OCI-LY7 (cell line): ENCODE measurements at regions of chr11 and their contacts with region 1.

Region 1: DNA sequence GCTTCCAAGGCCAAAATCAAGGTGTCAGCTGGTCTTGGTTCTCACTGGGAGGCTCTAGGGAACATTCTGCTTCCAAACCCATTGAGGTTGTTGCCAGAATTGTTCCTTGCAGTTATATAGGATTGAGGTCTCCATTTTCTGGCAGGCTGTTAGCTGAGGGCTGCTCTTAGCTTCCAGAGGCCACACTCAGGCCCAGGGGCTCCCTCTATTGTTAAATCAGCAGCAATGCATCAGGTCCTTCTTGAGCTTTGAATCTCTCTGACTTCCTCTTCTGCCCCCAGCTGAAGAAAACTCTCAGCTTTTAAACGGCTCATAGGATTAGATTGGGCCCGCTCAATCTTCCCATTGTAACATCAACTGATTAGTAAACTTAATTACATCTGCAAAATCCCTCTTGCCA is 39.3 kb upstream of the BSX start:
- DNase-seq: peak; percentile 62
- H3K4me3 ChIP-seq: no peak overlapping the region
- H3K27ac ChIP-seq: no peak overlapping the region
- H3K4me1 ChIP-seq: no peaks in the 10 kb centered on the region
- CTCF ChIP-seq: peak; percentile 79

Region 2: DNA sequence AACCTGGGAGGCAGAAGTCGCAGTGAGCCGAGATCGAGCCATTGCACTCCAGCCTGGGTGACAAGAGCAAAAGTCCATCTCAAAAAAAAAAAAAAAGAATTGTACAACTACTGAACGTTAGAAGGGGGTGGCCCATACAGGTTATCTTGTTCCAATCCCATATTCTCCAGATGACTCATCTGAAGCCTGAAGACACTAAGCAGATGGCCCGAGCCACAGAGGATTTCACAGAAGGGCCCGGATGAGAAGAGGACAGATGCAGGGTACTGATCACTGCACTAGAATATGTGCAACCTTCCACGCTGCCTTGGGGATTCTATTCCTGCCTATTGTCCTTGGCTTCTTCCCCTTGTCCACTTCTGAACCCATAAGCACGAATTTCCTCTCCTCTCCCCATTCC is 436.3 kb before region 1 on chr11:
- CTCF ChIA-PET with region 1: no interaction called
- POLR2A ChIA-PET with region 1: no interaction called
- intact Hi-C with region 1: loop called (anchors 10 kb)
- DNase-seq: no peak
- H3K4me3 ChIP-seq: no peak overlapping the region
- H3K27ac ChIP-seq: no peak overlapping the region
- H3K4me1 ChIP-seq: peaks cover 3% of the 10 kb centered on the region
- CTCF ChIP-seq: no peak

Region 3: GRCh38 chr11:122628810-122629555 is 392.0 kb before region 1 on chr11:
- CTCF ChIA-PET with region 1: no interaction called
- POLR2A ChIA-PET with region 1: no interaction called
- intact Hi-C with region 1: loop called (anchors 5 kb)
- DNase-seq: peak; percentile 85
- H3K4me3 ChIP-seq: no peak overlapping the region
- H3K27ac ChIP-seq: no peak overlapping the region
- H3K4me1 ChIP-seq: peaks cover 10% of the 10 kb centered on the region
- CTCF ChIP-seq: peak; percentile 94

Region 4: GRCh38 chr11:122863704-122864326 is 157.2 kb before region 1 on chr11:
- CTCF ChIA-PET with region 1: interaction called, 3 read pairs
- POLR2A ChIA-PET with region 1: no interaction called
- intact Hi-C with region 1: loop called (anchors 2 kb)
- DNase-seq: peak; percentile 51
- H3K4me3 ChIP-seq: no peak overlapping the region
- H3K27ac ChIP-seq: no peak overlapping the region
- H3K4me1 ChIP-seq: no peaks in the 10 kb centered on the region
- CTCF ChIP-seq: peak; percentile 99

Region 5: DNA sequence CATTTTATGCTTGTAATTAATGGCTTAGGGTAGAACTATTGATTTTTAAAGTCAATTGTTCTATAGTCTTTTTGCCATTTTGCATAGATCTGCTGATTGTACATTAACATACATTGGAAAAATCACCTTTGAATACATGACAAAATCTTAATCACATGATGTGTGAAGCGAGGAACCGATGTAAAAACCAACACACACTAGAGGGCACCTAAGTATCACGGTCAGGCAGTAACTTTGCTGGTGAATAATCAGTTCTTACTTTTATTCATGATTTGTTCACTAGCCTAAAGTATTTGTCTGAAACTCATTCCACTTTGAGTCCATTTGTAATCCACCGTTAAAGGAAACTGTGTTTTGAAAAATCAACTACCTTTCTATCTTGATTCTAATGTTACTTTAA is 110.2 kb before region 1 on chr11:
- CTCF ChIA-PET with region 1: no interaction called
- POLR2A ChIA-PET with region 1: no interaction called
- intact Hi-C with region 1: loop called (anchors 5 kb)
- DNase-seq: no peak
- H3K4me3 ChIP-seq: no peak overlapping the region
- H3K27ac ChIP-seq: no peak overlapping the region
- H3K4me1 ChIP-seq: no peaks in the 10 kb centered on the region
- CTCF ChIP-seq: peak; percentile 58

Region 6: DNA sequence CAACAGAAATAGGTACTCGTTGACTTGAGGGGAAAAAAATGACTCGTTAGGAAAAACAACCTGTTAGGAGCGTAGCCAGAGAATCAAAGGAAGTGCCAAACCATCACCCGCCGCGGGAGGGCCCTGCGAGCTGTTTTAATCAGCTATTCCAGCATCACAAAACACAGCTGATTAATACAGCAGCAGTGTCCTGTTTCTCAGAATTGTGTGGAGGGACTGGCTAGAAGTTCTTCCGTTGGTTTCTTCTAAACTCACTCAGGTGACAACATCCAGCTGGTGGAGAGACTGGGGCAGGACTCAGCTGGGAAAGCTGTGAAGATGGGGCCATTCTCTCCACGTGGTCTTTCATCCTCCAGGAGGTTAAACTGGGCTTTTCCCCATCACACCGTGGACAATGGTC is 12.9 kb after region 1 on chr11:
- CTCF ChIA-PET with region 1: no interaction called
- POLR2A ChIA-PET with region 1: no interaction called
- intact Hi-C with region 1: no loop called
- DNase-seq: no peak
- H3K4me3 ChIP-seq: no peak overlapping the region
- H3K27ac ChIP-seq: no peak overlapping the region
- H3K4me1 ChIP-seq: no peaks in the 10 kb centered on the region
- CTCF ChIP-seq: no peak